Activated T-helper 2 cell treated with anti-CD3 and anti-CD28 coated beads, Interferon-gamma antibody, Interleukin-2, Interleukin-4, amounts not matched to agents 10 μg/mL and 5 μg/mL and 100 μg/mL, durations not matched to agents 14 hours and 24 hours and 36 hours (primary cell): ENCODE measurements at regions of chr4 and their contacts with region 1.

Region 1: DNA sequence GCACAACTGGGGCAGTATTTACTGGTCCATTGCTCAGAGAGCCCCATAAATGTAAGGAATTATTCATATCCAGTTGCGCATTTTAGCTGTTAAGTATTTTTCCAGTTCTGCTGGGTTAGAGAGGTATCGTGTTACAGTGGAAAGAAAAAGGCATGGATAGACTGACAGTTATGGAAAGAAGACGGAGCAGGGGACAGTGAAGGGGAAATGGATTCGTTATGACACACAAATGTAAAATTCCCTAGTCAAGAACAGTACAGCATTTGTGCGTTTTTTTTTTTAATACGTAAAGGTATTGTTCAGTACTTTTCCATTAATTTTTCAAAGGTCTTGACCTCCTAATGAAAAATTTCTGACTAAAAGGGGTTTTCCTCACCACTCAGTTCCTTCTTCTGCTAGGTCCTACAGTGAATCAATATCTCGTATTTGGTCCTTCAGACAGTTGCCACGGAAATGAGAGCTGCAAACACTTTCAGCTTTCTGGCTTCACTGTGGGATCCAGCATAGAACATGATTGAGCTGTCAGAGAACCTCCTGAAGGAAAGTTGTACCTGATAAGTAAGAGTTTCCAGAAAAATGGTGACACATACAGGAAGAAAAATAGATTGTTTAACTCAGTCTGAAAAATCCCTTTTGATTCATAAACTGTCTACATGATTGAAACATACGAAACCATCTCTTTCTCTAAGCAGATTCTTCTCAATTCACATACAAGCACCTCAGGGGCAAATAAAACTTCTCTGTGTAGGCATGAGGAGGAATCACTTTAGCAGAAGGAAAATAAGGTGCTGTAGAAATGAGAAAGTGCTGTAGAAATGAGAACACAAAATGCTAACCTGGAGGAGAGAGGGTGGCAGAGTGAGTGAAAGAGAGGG is 21.8 kb upstream of the BBS12 start:
- DNase-seq: no peak
- H3K4me3 Mint-ChIP-seq: peak overlapping the region; percentile 62
- H3K27ac Mint-ChIP-seq: peak overlapping the region; percentile 93
- H3K4me1 Mint-ChIP-seq: peaks cover 69% of the 10 kb centered on the region
- H3K27me3 Mint-ChIP-seq: no peaks in the 10 kb centered on the region

Region 2: DNA sequence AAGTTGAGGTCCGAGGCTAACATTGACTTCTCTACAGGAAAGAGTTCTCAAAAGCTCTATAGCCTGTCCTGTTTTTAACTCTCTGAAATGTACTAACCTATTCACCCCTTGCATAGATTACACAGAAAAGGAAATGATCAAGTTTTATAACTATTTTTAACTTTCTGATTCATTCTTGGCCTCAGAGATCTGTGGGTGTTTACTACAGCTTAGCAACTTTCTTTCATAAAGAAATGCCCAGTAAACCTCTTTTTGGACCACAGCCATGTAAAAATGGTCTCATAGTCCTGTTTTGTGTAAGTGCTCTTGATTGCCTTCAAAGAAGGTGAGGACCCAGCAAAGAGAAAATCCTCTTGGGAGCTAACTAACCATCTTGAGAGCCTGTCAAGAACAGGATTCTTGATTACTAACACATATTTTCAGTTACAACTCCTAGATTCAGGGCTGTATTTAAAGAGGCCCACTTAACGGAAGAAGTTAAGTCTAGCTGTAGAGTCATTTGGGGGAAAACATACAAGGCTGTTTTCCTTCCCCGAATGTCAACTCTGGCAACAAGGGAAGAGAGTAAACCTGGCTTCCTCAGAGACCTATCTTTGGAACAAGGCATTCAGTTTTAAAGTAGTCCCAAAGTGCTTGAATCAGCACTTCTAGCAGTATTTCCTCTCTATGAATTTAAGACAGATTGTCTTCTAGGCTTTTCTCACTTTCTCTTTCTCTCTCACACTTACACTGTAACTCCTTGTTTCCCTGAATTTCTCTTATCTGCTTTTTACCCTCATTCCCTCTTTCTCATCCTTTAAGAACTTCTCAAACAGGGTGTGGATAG is 168.0 kb before region 1 on chr4:
- intact Hi-C with region 1: loop called (anchors 1 kb)
- DNase-seq: no peak
- H3K4me3 Mint-ChIP-seq: peak overlapping the region; percentile 53
- H3K27ac Mint-ChIP-seq: peak overlapping the region; percentile 87
- H3K4me1 Mint-ChIP-seq: peaks cover 74% of the 10 kb centered on the region
- H3K27me3 Mint-ChIP-seq: peaks cover 1% of the 10 kb centered on the region

Region 3: GRCh38 chr4:122689972-122690371 is 20.7 kb before region 1 on chr4:
- intact Hi-C with region 1: loop called (anchors 1 kb)
- DNase-seq: peak; percentile 34
- H3K4me3 Mint-ChIP-seq: no peak overlapping the region
- H3K27ac Mint-ChIP-seq: peak overlapping the region; percentile 70
- H3K4me1 Mint-ChIP-seq: peaks cover 72% of the 10 kb centered on the region
- H3K27me3 Mint-ChIP-seq: peaks cover 8% of the 10 kb centered on the region

Region 4: GRCh38 chr4:122732329-122733026 is 21.8 kb after region 1 on chr4 and contains the start of gene BBS12:
- intact Hi-C with region 1: loop called (anchors 2 kb)
- DNase-seq: peak; percentile 99
- H3K4me3 Mint-ChIP-seq: peak within 1 kb of the TSS; percentile 95
- H3K27ac Mint-ChIP-seq: peak within 1 kb of the TSS; percentile 92
- H3K4me1 Mint-ChIP-seq: peaks cover 14% of the 10 kb centered on the region
- H3K27me3 Mint-ChIP-seq: no peaks in the 10 kb centered on the region
- total RNA-seq, gene BBS12: 3.7 and 5.5 TPM in 2 replicates

Region 5: DNA sequence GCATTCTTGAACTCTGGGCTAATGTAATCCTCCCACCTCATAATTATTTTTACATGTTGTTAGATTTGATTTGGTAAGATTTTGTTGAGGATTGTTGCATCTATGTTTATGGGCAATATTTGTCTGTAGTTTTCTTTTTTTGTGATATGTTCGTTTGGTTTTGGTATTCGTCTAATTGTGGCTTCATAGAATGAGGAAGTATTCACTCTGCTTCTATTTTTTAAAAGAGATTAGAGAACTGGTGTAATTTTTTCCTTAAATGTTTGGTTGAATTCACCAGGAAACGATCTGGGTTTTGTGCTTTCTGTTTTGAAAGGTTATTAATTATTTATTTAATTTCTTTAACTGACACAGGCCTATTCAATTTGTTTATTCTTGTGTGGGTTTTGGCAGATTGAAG is 373.0 kb after region 1 on chr4:
- intact Hi-C with region 1: no loop called
- DNase-seq: no peak
- H3K4me3 Mint-ChIP-seq: no peak overlapping the region
- H3K27ac Mint-ChIP-seq: no peak overlapping the region
- H3K4me1 Mint-ChIP-seq: peaks cover 1% of the 10 kb centered on the region
- H3K27me3 Mint-ChIP-seq: no peaks in the 10 kb centered on the region

Region 6: DNA sequence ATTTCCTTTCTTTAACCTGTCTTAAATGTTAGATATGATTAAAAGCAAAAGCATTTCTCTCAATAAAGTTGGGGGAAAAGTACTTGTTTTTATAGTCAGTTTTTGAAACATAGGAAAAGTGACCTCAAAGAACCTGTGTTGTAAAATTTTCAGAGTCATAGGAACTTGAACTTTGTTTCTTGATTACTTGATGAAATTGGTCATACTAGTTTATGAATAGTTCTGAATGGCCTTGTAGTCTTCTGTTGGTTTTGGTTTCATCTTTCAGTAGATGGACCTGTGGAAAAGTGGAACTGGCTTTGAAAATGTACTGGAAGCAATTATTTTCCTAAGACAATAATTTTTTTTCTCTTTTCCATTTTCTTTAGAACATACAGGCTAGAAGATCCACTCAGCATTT is 433.9 kb after region 1 on chr4:
- intact Hi-C with region 1: no loop called
- DNase-seq: no peak
- H3K4me3 Mint-ChIP-seq: no peak overlapping the region
- H3K27ac Mint-ChIP-seq: no peak overlapping the region
- H3K4me1 Mint-ChIP-seq: no peaks in the 10 kb centered on the region
- H3K27me3 Mint-ChIP-seq: no peaks in the 10 kb centered on the region